Gastrocnemius medialis (tissue), 4 donors: ENCODE measurements at regions of chr17 and their contacts with region 1.

Region 1: GRCh38 chr17:82320956-82321927 is 3.8 kb upstream of the CD7 start:
- DNase-seq: no peak
- ATAC-seq: peak; percentile 38 to 69
- H3K4me3 ChIP-seq: no peak overlapping the region
- H3K27ac ChIP-seq: no peak overlapping the region
- H3K4me1 ChIP-seq: no peaks in the 10 kb centered on the region
- H3K27me3 ChIP-seq: peaks cover 0 to 2% (median 0%) of the 10 kb centered on the region in 3 donors
- CTCF ChIP-seq: peak; percentile 86 to 99 (median 99)
- POLR2A ChIP-seq: no peak

Region 2: GRCh38 chr17:82205719-82206508 is 115.3 kb before region 1 on chr17:
- in situ Hi-C with region 1: loop called in 3 of 4 experiments (anchors 10 kb)
- intact Hi-C with region 1: loop called (anchors 1 kb)
- DNase-seq: peak; percentile 63 to 81
- ATAC-seq: peak; percentile 90 to 92
- H3K4me3 ChIP-seq: peak overlapping the region in 1 of 4 donors; percentile 23
- H3K27ac ChIP-seq: peak overlapping the region; percentile 8 to 71 (median 67)
- H3K4me1 ChIP-seq: peaks cover 5 to 6% of the 10 kb centered on the region in 2 donors
- H3K27me3 ChIP-seq: no peaks in the 10 kb centered on the region
- CTCF ChIP-seq: peak; percentile 91 to 94 (median 92)
- POLR2A ChIP-seq: no peak

Region 3: GRCh38 chr17:82236142-82236981 is 84.9 kb before region 1 on chr17:
- in situ Hi-C with region 1: no loop called
- intact Hi-C with region 1: loop called (anchors 1 kb)
- DNase-seq: peak; percentile 80 to 96
- ATAC-seq: peak; percentile 30 to 51
- H3K4me3 ChIP-seq: peak overlapping the region; percentile 25 to 58 (median 50)
- H3K27ac ChIP-seq: peak overlapping the region; percentile 90 to 98 (median 93)
- H3K4me1 ChIP-seq: peaks cover 81 to 95% of the 10 kb centered on the region in 2 donors
- H3K27me3 ChIP-seq: no peaks in the 10 kb centered on the region
- CTCF ChIP-seq: peak; percentile 94 to 99 (median 98)
- POLR2A ChIP-seq: no peak